ENCODE measurements at regions of chr14 and their contacts with region 1.

Region 1: GRCh38 chr14:106277503-106277902 is 751.1 kb downstream of the TMEM121 start:
- DNase-seq: no peak
- ATAC-seq: peak; percentile 81
- H3K4me3 ChIP-seq: no peak overlapping the region
- H3K27ac ChIP-seq: no peak overlapping the region
- H3K4me1 ChIP-seq: no peaks in the 10 kb centered on the region
- H3K27me3 ChIP-seq: peaks cover 0 to 3% of the 10 kb centered on the region in 2 experiments; a peak in 3 of 4 replicates
- CTCF ChIP-seq: peak; percentile 81 to 98 (median 94)
- EP300 ChIP-seq: no peak
- POLR2A ChIP-seq: no peak
- RAD21 ChIP-seq: peak; percentile 75

Region 2: DNA sequence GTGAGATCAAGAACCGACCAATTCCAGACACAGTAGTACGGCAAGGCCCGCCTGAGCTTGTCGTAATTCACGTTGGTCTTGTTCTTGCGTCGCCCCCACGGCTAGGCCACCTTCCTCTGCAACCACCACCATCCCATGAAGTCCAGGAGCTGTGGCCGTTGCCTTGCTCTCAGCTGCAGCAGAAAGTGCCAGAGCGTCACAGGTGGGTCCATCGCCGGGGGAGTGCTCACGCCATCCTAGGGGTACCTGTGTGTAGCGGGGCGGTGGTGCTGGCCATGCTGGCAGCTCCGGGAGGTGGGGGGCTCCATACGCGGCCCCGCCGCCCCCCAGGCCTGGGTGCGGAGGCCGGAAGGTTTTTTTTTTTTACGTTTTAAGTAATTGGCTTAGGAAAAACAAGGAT is 728.0 kb before region 1 on chr14:
- CTCF ChIA-PET with region 1: no interaction called
- POLR2A ChIA-PET with region 1: no interaction called
- RAD21 ChIA-PET with region 1: no interaction called
- SMC1A ChIA-PET with region 1: no interaction called
- in situ Hi-C with region 1: loop called (anchors 10 kb)
- intact Hi-C with region 1: no loop called
- DNase-seq: no peak
- ATAC-seq: no peak
- H3K4me3 ChIP-seq: no peak overlapping the region
- H3K27ac ChIP-seq: no peak overlapping the region
- H3K4me1 ChIP-seq: no peaks in the 10 kb centered on the region
- H3K27me3 ChIP-seq: peaks cover 0 to under 1% of the 10 kb centered on the region in 2 experiments; a peak in 1 of 4 replicates
- CTCF ChIP-seq: no peak
- EP300 ChIP-seq: no peak
- POLR2A ChIP-seq: no peak
- RAD21 ChIP-seq: no peak

Region 3: GRCh38 chr14:105700622-105701288 is 576.7 kb before region 1 on chr14:
- CTCF ChIA-PET with region 1: no interaction called
- POLR2A ChIA-PET with region 1: no interaction called
- RAD21 ChIA-PET with region 1: no interaction called
- SMC1A ChIA-PET with region 1: no interaction called
- in situ Hi-C with region 1: loop called (anchors 10 kb)
- intact Hi-C with region 1: loop called (anchors 10 kb)
- DNase-seq: peak; percentile 77
- ATAC-seq: peak; percentile 63
- H3K4me3 ChIP-seq: peak overlapping the region; percentile 5; the same call in 1 of the 2 replicates
- H3K27ac ChIP-seq: peak overlapping the region; percentile 98
- H3K4me1 ChIP-seq: peaks cover 41% of the 10 kb centered on the region
- H3K27me3 ChIP-seq: no peaks in the 10 kb centered on the region
- CTCF ChIP-seq: no peak
- EP300 ChIP-seq: peak; percentile 46 to 82; a peak in 1 of 4 replicates
- POLR2A ChIP-seq: peak; percentile 67
- RAD21 ChIP-seq: 0 out of 2 replicates have a peak, but pooled peaks have one; percentile 1

Region 4: GRCh38 chr14:105817971-105818711 is 459.4 kb before region 1 on chr14:
- CTCF ChIA-PET with region 1: interaction called, 4 read pairs
- POLR2A ChIA-PET with region 1: interaction called, 6 read pairs
- RAD21 ChIA-PET with region 1: interaction called, 4 read pairs
- SMC1A ChIA-PET with region 1: interaction called, 4 read pairs
- in situ Hi-C with region 1: loop called (anchors 25 kb)
- intact Hi-C with region 1: no loop called
- DNase-seq: peak; percentile 71
- ATAC-seq: peak; percentile 95
- H3K4me3 ChIP-seq: no peak overlapping the region
- H3K27ac ChIP-seq: peak overlapping the region; percentile 31
- H3K4me1 ChIP-seq: peaks cover 16% of the 10 kb centered on the region
- H3K27me3 ChIP-seq: no peaks in the 10 kb centered on the region
- CTCF ChIP-seq: no peak
- EP300 ChIP-seq: peak in 1 of 2 experiments; percentile 31; a peak in 1 of 4 replicates
- POLR2A ChIP-seq: no peak
- RAD21 ChIP-seq: no peak

Region 5: DNA sequence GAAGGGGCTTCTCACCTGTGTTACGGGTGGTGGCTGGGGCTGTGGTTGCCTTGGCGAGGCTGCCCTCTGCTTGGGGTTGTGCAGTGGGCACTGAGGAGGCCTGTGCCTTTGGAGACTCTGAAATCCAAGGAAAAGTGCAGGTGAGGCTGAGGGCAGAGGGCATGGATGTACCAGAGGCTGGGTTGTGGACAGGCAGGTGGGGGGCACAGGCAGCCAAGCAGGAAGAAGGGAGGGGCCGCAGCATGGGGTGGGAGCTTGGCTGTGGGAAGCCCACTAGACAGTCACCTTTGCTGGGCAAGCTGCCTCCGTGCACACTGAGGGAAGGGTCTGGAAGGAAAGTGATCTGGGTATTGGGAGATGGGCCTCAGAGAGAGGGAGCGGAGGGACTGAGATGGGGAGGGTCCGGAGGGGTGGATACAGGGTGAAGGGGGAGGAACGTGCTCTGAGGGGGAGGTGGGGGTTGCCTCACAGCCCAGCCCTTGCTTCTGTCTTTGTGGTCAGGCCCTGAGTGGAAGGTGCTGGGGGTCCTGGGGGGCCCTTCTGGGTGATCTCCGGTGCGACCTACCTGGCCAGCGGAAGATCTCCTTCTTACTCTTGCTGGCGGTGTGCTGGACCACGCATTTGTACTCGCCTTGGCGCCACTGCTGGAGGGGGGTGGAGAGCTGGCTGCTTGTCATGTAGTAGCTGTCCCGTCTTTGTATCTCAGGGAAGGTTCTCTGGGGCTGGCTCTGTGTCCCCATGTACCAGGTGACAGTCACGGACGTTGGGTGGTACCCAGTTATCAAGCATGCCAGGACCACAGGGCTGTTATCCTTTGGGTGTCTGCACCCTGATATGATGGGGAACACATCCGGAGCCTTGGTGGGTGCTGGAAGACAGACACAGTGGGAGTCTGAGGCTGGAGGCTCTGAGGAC is 432.4 kb before region 1 on chr14:
- CTCF ChIA-PET with region 1: interaction called, 15 read pairs
- POLR2A ChIA-PET with region 1: no interaction called
- RAD21 ChIA-PET with region 1: interaction called, 4 read pairs
- SMC1A ChIA-PET with region 1: no interaction called
- in situ Hi-C with region 1: no loop called
- intact Hi-C with region 1: no loop called
- DNase-seq: no peak
- ATAC-seq: no peak
- H3K4me3 ChIP-seq: no peak overlapping the region
- H3K27ac ChIP-seq: no peak overlapping the region
- H3K4me1 ChIP-seq: no peaks in the 10 kb centered on the region
- H3K27me3 ChIP-seq: no peaks in the 10 kb centered on the region
- CTCF ChIP-seq: no peak
- EP300 ChIP-seq: no peak
- POLR2A ChIP-seq: no peak
- RAD21 ChIP-seq: no peak

Region 6: GRCh38 chr14:106294324-106294723 is 16.8 kb after region 1 on chr14:
- CTCF ChIA-PET with region 1: interaction called, 25 read pairs
- POLR2A ChIA-PET with region 1: no interaction called
- RAD21 ChIA-PET with region 1: no interaction called
- SMC1A ChIA-PET with region 1: interaction called, 6 read pairs
- in situ Hi-C with region 1: no loop called
- intact Hi-C with region 1: no loop called
- DNase-seq: no peak
- ATAC-seq: no peak; the same call in 2 of the 3 replicates
- H3K4me3 ChIP-seq: no peak overlapping the region
- H3K27ac ChIP-seq: no peak overlapping the region
- H3K4me1 ChIP-seq: no peaks in the 10 kb centered on the region; the same call in 1 of the 2 replicates
- H3K27me3 ChIP-seq: no peaks in the 10 kb centered on the region; a peak in 1 of 4 replicates
- CTCF ChIP-seq: no peak
- EP300 ChIP-seq: no peak
- POLR2A ChIP-seq: no peak
- RAD21 ChIP-seq: no peak

Region 7: GRCh38 chr14:106372870-106373652 is 95.6 kb after region 1 on chr14:
- CTCF ChIA-PET with region 1: interaction called, 34 read pairs
- POLR2A ChIA-PET with region 1: interaction called, 3 read pairs
- RAD21 ChIA-PET with region 1: interaction called, 5 read pairs
- SMC1A ChIA-PET with region 1: interaction called, 23 read pairs
- in situ Hi-C with region 1: no loop called
- intact Hi-C with region 1: no loop called
- DNase-seq: no peak
- ATAC-seq: peak; percentile 99
- H3K4me3 ChIP-seq: no peak overlapping the region
- H3K27ac ChIP-seq: no peak overlapping the region
- H3K4me1 ChIP-seq: peaks cover 6% of the 10 kb centered on the region; the same call in 1 of the 2 replicates
- H3K27me3 ChIP-seq: no peaks in the 10 kb centered on the region; a peak in 2 of 4 replicates
- CTCF ChIP-seq: peak; percentile 86 to 93 (median 89)
- EP300 ChIP-seq: 0 out of 4 replicates have a peak, but pooled peaks of 1 of the 2 experiments have one; percentile 9
- POLR2A ChIP-seq: no peak
- RAD21 ChIP-seq: peak; percentile 88